Ascending aorta (tissue), 2 donors: ENCODE measurements at regions of chr3 and their contacts with region 1.

Region 1: DNA sequence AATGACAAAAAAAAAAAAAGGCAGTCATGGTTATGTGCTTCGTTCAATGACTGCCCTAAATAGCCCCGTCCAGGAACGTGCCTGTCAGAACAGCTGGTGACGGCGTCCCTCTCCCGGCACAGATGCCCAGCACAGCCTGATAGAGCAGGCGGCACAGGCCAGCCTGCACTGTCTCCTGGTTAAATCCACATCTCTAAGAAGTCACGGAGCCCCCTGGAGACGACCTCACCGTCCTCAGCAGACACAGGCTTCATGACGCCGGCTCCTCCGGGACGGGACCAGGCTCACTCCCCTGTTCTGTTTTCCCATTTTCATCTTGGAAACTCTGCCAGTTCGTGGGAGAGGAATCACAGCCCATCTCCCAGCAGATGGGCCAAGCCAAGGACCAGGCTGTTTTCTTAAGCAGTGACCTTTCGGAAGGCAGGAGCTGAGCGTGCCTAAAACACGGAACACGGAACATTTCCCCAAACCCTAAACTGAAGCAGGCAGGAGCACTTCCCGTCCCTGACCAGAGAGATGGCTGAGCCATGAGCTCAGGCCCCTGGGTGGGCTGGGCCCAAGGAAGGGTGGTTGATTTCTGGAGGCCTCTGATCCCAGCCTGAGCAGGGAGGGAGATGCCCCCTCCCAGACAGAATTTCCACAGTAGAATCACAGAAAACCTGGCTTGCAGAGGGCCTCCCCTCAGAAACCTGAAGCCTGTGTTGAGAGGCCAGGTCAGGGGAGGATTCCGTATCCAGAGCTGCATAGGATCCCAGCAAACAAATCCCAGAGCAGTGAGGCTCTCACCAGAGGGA is 35.9 kb downstream of the ADCY5 start:
- DNase-seq: no peak
- H3K4me3 ChIP-seq: peak overlapping the region; percentile 15 to 51
- H3K27ac ChIP-seq: peak overlapping the region; percentile 85 to 87
- H3K4me1 ChIP-seq: peaks cover 14 to 72% of the 10 kb centered on the region in 2 donors
- H3K27me3 ChIP-seq: no peaks in the 10 kb centered on the region
- CTCF ChIP-seq: no peak

Region 2: DNA sequence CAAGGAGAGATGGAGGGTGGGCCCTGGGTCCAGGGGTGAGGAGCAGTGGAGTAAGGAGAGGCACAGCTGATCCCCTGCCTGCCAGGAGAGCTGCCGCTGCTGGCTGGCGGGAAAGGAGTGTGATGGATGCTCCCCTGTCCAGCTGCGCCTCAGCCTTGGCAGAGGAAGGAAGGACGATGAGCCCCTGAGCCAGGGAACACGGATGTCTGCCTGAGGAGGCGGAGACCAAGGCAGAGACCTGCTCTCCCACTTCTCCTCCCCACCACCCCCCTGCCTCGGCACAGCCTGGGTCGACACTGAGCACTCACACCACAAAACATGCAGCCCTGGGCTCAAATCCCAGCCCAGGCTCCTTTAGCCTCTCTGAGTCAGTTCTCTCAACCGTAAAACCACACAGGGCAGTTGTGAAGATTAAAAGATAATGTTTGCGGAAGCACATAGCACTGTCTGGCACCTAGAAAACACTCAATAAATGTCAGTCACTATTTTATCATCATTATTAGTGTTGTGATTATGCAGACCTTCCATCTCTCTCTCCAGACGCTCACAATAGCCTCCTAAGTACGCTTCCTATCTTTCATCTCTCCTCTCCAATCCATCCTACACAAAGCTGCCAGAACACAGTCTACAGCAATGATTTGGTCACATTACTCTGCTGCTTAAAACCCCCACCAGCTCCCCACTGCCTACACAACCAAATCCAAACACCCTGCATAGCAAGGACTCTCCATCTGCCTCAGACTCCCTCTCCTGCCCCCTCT is 437.7 kb before region 1 on chr3:
- intact Hi-C with region 1: loop called (anchors 5 kb)
- DNase-seq: peak in 1 of 2 donors; percentile 66
- H3K4me3 ChIP-seq: no peak overlapping the region
- H3K27ac ChIP-seq: peak overlapping the region; percentile 80 to 90
- H3K4me1 ChIP-seq: peaks cover 24 to 38% of the 10 kb centered on the region in 2 donors
- H3K27me3 ChIP-seq: no peaks in the 10 kb centered on the region
- CTCF ChIP-seq: no peak

Region 3: GRCh38 chr3:123328851-123329635 is 84.0 kb before region 1 on chr3:
- intact Hi-C with region 1: no loop called
- DNase-seq: peak in 1 of 2 donors; percentile 88
- H3K4me3 ChIP-seq: no peak overlapping the region
- H3K27ac ChIP-seq: peak overlapping the region; percentile 86
- H3K4me1 ChIP-seq: peaks cover 14 to 66% of the 10 kb centered on the region in 2 donors
- H3K27me3 ChIP-seq: no peaks in the 10 kb centered on the region
- CTCF ChIP-seq: peak; percentile 93 to 96 (median 96)

Region 4: DNA sequence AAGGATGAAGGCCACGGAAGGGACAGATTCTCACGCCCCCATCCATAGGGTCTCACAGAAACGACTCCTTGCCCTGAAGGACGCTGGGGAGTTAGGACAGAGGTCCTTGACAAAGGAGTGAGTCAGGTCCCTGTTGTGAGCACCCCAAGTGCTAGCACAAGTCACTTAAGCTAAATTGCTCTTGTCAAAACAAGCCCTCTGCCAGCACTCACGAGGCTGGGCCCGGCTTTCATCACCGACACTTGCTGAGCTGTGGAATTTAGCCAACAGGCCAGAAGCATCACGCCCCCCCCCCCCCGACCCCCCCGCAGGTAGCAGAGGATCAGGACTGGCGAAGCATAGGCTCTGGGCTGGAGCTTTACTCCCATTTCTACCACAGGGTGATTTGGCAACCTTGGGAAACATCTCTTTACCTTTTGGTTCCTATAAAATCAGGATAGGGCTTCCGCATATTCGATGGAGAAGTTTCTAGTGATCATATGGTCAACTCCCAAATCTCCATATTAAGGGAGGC is 39.5 kb before region 1 on chr3:
- intact Hi-C with region 1: loop called (anchors 5 kb)
- DNase-seq: no peak
- H3K4me3 ChIP-seq: no peak overlapping the region
- H3K27ac ChIP-seq: peak overlapping the region; percentile 80 to 82
- H3K4me1 ChIP-seq: peaks cover 11 to 63% of the 10 kb centered on the region in 2 donors
- H3K27me3 ChIP-seq: no peaks in the 10 kb centered on the region
- CTCF ChIP-seq: no peak